ENCODE measurements at regions of chr12 and their contacts with region 1.

Region 1: DNA sequence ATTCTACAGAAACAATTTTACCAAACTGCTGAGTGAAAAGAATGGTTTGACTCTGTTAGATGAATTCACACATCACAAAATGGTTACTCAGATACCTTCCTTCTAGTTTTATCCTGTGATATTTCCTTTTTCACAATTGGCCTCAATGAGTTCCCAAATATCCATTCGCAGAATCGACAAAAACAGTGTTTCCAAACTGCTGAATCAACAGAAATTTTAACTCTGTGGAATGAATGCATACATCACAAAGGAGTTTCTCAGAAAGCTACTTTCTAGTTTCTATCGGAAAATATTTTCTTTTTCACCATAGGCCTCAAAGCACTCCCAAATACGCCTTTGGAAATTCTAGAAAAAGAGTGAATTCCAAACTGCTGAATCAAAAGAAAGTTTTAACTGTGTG is 525.0 kb downstream of the ALG10 start:
- DNase-seq: no peak
- ATAC-seq: no peak
- H3K4me3 Mint-ChIP-seq: no peak overlapping the region
- H3K27ac Mint-ChIP-seq: no peak overlapping the region
- H3K4me1 Mint-ChIP-seq: no peaks in the 10 kb centered on the region
- H3K27me3 Mint-ChIP-seq: no peaks in the 10 kb centered on the region

Region 2: DNA sequence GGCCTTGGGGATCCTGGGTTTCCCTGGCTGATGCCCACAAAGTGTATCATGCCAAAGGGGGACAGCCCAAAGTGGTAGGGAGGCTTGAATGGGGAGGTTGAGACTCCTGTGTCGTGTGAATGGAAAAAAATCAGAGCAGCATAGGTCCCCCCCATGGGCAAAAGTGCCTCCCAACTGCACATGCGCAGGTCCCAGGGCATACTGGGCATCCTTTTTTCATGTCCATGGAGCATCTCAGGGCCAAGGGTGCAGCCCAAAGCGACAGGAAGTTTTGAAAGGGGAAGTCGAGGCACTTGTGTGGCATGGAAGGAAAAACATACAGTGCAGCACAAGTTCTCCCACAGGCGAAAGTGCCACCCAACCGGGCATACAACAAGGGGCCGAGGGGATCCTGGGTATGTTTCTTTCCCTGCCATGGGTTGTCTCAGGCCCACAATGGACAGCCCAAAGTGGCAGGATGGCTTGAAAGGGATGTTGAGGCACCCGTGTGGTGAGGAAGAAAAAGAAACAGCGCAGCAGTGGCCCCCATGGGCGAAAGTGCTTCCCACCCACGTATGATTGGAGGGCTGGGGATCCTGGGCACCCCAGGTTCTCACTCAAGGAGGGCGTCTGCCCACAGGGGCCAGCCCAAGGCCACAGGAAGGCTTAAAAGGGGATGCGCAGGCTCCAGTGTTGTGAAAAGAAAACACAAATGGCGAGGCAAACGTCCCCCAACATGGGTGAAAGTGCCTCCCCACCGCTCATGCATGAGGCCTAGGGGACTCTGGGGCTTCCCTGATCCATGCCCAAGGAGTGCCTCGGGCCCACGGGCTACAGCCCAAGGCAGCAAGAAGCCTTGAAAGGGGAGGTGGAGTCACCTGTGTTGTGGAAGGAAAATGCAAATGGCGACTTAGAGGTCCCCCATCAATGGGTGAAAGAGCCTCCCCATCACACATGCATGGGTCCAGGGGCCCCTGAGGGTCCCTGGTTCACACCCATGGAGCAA is 48.8 kb after region 1 on chr12:
- CTCF ChIA-PET with region 1: no interaction called
- POLR2A ChIA-PET with region 1: no interaction called
- intact Hi-C with region 1: loop called in 1 of 2 experiments (anchors 10 kb)
- DNase-seq: no peak
- ATAC-seq: no peak
- H3K4me3 Mint-ChIP-seq: no peak overlapping the region
- H3K27ac Mint-ChIP-seq: no peak overlapping the region
- H3K4me1 Mint-ChIP-seq: no peaks in the 10 kb centered on the region
- H3K27me3 Mint-ChIP-seq: no peaks in the 10 kb centered on the region

Region 3: GRCh38 chr12:34606749-34607519 is 59.7 kb after region 1 on chr12:
- CTCF ChIA-PET with region 1: no interaction called
- POLR2A ChIA-PET with region 1: no interaction called
- intact Hi-C with region 1: no loop called
- DNase-seq: no peak
- ATAC-seq: no peak
- H3K4me3 Mint-ChIP-seq: no peak overlapping the region
- H3K27ac Mint-ChIP-seq: no peak overlapping the region
- H3K4me1 Mint-ChIP-seq: no peaks in the 10 kb centered on the region
- H3K27me3 Mint-ChIP-seq: no peaks in the 10 kb centered on the region